Right ventricle myocardium inferior (tissue), 1 donor: ENCODE measurements at regions of chr6 and their contacts with region 1.

Region 1: DNA sequence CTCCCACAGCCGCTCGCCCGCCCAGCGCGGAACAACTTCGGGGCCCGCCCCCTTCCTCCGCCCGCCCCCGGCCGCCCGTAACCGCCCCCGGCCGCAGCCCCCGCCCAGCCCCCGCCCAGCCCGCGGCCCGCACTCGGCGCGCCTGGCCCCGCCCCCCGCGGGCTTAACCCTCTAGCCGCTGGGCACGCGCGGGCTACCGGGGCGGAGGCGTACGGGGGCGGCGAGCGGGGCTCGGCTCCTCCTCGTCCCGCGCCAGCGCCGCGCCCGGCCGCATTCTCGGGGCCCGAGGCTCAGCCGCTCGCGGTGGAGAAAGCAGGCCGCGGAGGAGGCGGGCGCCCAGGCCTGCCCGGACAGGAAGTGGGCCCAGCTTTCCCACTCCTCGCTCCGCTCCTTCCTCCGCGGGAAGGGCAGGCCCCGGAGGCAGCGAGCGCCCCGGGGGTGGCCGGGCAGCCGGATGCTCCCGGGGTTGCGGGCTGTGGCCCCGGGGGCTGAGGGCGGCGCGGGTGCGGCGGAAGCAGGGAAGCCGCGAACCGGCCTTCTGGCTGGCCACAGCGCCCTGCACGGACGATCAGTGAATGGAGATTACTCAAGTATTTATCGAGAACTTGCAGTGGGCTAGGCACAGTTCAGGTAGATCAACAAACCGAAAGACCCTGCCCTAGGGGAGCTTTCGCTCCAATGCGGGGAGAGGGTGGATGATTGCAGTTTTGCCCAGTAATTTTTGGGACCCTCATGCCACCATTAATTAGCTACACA is at the start of gene TRAM2:
- DNase-seq: peak; percentile 95
- ATAC-seq: peak; percentile 90
- total RNA-seq, gene TRAM2: 12.6 TPM

Region 2: DNA sequence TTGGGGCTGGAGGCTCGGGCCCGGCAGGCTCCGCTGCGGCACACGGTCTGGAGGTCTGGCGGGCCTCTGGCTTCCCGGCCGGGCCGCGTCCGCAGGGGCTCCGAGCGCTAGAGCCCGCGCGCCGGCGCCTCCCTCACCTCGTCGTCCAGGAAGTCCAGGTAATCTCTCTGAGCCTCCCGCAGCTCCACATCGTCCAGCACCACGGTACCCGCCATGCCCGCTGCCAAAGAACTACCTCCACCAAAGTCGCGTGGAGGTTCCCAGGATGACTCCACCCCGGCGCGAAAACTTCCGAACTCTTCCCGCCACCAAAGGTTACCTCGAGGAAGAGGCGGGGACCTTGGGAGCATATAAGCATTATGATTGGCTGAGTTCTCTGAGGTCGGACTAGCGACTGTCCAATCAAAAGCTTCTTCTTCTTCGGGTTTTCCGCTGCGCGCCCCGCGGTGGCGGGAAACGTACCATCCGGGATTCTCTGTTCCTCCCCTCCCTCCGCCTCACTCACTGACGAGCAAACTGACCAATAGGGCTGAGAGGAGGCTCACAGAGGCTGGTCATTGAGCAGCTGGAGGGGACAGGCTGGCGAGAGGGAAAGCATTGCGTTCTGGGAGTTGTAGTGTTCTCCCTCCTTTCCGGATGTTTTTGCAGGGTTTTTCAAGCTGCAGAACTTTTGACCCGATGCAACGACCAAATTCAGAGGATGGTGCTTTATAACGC is 292.6 kb before region 1 on chr6 and contains the start of gene MCM3:
- intact Hi-C with region 1: loop called (anchors 10 kb)
- DNase-seq: peak; percentile 97
- ATAC-seq: peak; percentile 100
- total RNA-seq, gene MCM3: 21.7 TPM

Region 3: DNA sequence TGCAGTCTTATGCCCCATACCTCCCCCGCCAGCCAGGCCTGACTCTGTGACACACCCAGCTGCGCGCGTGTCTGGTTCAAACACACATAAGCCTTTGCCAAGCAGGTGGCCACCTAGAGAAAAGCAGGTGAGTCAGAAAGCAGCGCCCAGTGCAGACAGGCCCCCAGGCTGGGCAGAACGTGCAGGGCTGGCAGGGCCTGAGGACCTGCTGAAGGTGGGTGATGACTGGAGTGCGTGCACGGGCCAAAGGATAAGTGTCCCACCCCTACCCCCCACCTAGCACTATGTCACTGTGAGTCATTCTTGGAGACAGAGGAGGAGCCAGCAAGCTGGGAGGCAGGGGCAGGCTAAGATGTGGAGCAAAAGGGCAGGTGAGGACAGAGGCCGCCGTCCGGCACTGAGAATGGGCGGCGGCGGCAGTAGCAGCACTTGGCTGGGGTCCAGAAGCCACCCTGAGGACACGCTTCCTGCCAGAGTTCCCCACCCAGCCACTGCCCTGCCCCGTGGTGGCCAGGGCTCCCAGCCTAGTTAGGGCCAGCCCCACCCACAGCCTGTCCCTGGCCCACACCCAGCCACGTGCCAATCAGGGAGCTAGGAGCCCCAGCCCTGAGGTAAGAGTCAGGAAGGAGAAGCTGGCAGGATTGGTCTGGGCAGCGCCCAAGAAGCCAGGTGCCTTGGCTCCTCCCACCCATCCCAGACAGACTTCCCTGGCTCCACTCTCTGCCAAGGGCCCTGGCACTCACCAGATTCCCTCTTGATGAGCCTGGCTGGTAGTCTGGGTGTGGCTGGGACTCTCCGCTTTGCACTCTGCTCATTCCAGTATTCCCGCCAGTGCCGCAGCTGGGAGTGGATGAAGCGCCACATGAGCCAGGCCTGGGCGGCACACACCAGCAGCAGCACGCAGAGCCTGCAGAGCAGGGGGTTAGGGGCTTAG is 73.1 kb before region 1 on chr6:
- intact Hi-C with region 1: loop called (anchors 2 kb)
- DNase-seq: peak; percentile 92
- ATAC-seq: peak; percentile 83

Region 4: GRCh38 chr6:52598123-52598823 is 21.1 kb after region 1 on chr6:
- intact Hi-C with region 1: loop called (anchors 2 kb)
- DNase-seq: peak; percentile 79
- ATAC-seq: peak; percentile 70

Region 5: GRCh38 chr6:52839119-52840055 is 262.2 kb after region 1 on chr6:
- intact Hi-C with region 1: no loop called
- DNase-seq: peak; percentile 55
- ATAC-seq: peak; percentile 42

Region 6: GRCh38 chr6:53544470-53545308 is 967.5 kb after region 1 on chr6 and contains the start of gene GCLC:
- intact Hi-C with region 1: loop called (anchors 10 kb)
- DNase-seq: peak; percentile 98
- ATAC-seq: peak; percentile 84
- total RNA-seq, gene GCLC: 26.7 TPM